Endothelial cell of umbilical vein (primary cell): ENCODE measurements at regions of chr19 and their contacts with region 1.

Region 1: DNA sequence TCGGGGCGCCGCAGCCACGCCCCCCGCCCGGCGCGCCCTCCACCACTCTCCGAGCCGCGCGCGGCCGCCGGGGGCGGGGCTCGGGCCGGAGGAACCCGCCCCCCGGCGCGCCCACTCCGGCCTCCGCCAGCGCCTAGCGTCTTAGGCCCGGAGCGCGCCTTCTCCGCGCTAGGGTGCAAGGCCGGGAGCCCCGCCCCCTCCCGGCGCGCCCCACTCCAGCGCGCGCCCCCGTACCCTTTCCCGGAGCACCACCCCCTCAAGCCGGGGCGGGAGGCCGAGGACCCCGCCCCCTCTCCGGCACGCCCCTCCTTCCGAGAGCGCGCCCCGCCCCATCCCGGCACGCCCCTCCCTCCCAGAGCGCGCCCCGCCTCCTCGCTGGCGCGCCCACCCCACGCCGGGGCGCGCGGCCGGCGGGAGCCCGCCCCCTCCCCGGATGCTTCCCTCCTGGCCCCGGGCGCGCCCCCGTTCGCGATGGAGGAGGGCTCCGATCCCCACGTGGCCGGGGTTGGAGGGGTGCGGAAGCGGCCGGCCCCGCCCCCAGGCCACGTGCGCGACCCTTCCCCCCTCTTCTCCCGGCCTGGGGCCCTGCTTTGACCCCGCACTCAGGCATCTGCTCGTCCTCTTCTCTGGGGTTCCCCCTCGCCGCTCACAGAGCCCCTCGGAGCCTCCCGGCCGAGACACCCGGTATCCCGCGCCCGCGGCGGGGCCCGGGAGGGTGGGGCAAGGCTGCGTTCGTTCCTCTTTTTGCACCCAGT is 524 bp upstream of the KLF16 start:
- DNase-seq: peak; percentile 89
- H3K4me3 ChIP-seq: peak overlapping the region; percentile 42 to 78 (median 73)
- H3K27ac ChIP-seq: peak overlapping the region; percentile 65
- H3K4me1 ChIP-seq: peaks cover 21% of the 10 kb centered on the region
- H3K27me3 ChIP-seq: no peaks in the 10 kb centered on the region
- CTCF ChIP-seq: no peak
- POLR2A ChIP-seq: peak; percentile 37

Region 2: DNA sequence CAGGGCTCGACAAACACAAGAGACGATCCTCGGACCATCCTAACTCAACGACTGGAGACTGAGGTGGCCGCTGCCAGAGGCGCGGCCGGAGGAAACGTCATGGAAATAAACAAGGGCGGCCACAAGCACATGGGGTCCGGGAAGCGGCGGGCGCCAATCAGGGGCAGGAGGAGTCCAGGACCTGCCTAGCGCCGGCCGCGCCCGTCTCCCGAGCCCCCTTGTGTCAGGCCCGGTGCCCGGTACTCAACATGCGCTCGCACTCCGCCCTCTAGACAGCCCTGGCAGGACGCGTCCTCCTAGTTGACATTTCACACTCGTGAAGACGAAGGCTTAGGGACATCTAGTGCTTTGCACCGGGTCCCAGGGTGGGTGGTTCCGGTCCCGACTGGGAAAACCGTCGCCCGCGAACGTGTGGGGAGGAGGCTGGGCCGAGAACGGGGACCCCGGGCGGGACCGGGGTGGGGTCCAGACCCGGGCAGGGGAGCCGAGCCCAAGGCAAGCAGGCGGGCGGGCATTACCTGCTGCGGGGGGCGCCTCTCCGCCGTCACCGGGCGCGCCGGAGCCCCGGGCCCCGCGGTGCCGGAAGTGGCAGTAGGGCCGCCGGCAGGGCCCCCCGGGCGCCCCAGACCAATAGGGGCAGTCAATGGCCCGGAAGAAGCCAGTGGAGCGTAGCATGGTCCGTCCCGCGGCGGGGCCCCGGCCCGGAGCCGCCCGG is 16.1 kb before region 1 on chr19:
- CTCF ChIA-PET with region 1: interaction called, 4 read pairs
- POLR2A ChIA-PET with region 1: no interaction called
- dilution Hi-C with region 1: no loop called
- intact Hi-C with region 1: loop called (anchors 1 kb)
- DNase-seq: peak; percentile 64
- H3K4me3 ChIP-seq: peak overlapping the region; percentile 47 to 76 (median 67)
- H3K27ac ChIP-seq: peak overlapping the region; percentile 99
- H3K4me1 ChIP-seq: peaks cover 8% of the 10 kb centered on the region
- H3K27me3 ChIP-seq: no peaks in the 10 kb centered on the region
- CTCF ChIP-seq: no peak
- POLR2A ChIP-seq: no peak

Region 3: DNA sequence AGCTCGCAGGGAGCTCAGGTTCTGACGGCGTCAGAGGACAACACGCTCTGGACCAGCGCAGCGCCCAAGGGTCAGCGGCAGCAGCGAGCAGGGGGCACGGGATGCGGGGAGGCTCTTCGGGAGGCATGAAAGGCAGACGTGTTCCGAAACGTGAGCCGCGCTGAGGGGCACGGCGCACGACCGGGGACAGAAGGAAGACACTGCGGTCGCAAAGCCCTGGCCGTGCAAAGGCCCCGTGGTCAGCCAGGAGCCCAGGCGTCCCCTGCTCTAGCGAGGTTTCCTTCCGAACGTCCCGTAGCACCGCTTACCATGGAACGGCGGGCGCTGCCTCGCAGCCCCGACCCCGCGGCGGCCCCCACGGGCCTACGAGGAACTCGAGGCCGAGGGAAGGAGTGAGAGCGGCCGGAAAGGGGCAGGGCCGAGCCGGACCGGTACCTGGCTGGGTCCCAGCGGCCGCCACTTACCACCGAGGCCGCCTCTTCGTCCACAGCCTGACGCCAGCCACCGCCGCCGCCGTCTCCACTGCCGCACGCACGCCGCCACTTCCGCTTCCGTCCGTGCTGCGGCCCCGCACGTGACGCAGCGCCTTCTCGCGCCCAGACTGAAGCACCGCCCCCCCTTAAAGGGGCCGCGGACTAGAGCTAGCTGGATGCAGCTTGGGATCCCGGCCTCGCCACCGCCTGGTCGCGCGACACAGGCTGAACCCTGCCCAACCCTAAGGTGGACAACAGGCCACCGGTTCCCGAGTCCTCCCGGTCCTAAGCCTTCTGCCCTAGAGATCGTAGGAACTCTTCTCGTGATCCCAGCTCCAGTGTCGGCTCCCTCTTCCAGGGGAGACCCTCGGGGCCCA is 12.0 kb after region 1 on chr19:
- CTCF ChIA-PET with region 1: interaction called, 44 read pairs
- POLR2A ChIA-PET with region 1: no interaction called
- dilution Hi-C with region 1: no loop called
- intact Hi-C with region 1: loop called (anchors 1 kb)
- DNase-seq: peak; percentile 91
- H3K4me3 ChIP-seq: peak overlapping the region; percentile 52 to 83 (median 72)
- H3K27ac ChIP-seq: peak overlapping the region; percentile 92
- H3K4me1 ChIP-seq: peaks cover 21% of the 10 kb centered on the region
- H3K27me3 ChIP-seq: no peaks in the 10 kb centered on the region
- CTCF ChIP-seq: no peak
- POLR2A ChIP-seq: peak; percentile 88

Region 4: DNA sequence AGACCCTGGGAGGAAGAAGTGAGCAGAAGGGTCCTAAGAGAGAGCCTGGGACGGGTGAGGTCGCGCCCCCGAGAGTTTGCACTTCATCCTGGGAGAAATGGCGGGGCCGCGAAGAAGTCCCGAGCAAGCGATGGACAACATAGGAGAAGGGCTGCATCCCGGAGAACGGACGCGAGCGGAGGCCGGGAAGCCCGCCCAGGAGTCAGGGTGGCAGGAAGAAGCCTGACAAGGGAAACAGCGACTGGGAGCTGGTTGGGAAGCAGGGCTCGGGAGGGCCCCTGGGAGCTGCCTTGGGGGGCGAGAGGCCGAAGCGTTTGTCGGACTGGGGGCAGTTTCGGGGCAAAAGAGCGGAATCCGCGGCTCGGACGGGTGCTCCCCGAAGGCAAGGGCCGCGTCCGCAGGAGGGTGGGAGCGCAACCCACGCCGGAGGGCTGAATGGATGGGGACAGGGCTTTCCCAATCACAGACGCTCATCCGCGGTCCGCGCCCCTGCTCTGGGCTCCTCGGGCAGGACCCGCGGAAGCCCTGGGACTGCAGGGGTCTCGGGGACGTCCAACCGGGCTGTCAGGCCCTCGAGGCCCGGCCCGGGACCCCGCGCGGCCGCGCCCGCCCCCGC is 20.9 kb after region 1 on chr19:
- CTCF ChIA-PET with region 1: interaction called, 12 read pairs
- POLR2A ChIA-PET with region 1: no interaction called
- dilution Hi-C with region 1: no loop called
- intact Hi-C with region 1: loop called (anchors 2 kb)
- DNase-seq: no peak
- H3K4me3 ChIP-seq: peak overlapping the region; percentile 83 to 92 (median 88)
- H3K27ac ChIP-seq: peak overlapping the region; percentile 78
- H3K4me1 ChIP-seq: peaks cover 27% of the 10 kb centered on the region
- H3K27me3 ChIP-seq: no peaks in the 10 kb centered on the region
- CTCF ChIP-seq: no peak
- POLR2A ChIP-seq: peak; percentile 61

Region 5: GRCh38 chr19:1905071-1905862 is 41.4 kb after region 1 on chr19 and contains the starts of genes ADAT3 and SCAMP4:
- CTCF ChIA-PET with region 1: interaction called, 4 read pairs
- POLR2A ChIA-PET with region 1: no interaction called
- dilution Hi-C with region 1: no loop called
- intact Hi-C with region 1: loop called (anchors 1 kb)
- DNase-seq: peak; percentile 99
- H3K4me3 ChIP-seq: peak within 1 kb of the TSS; percentile 55 to 63 (median 61)
- H3K27ac ChIP-seq: peak within 1 kb of the TSS; percentile 73
- H3K4me1 ChIP-seq: no peaks in the 10 kb centered on the region
- H3K27me3 ChIP-seq: no peaks in the 10 kb centered on the region
- CTCF ChIP-seq: no peak
- POLR2A ChIP-seq: peak; percentile 73
- total RNA-seq, gene ADAT3: 8.0 and 11.7 TPM in 2 replicates
- total RNA-seq, gene SCAMP4: 68.2 and 72.2 TPM in 2 replicates

Region 6: DNA sequence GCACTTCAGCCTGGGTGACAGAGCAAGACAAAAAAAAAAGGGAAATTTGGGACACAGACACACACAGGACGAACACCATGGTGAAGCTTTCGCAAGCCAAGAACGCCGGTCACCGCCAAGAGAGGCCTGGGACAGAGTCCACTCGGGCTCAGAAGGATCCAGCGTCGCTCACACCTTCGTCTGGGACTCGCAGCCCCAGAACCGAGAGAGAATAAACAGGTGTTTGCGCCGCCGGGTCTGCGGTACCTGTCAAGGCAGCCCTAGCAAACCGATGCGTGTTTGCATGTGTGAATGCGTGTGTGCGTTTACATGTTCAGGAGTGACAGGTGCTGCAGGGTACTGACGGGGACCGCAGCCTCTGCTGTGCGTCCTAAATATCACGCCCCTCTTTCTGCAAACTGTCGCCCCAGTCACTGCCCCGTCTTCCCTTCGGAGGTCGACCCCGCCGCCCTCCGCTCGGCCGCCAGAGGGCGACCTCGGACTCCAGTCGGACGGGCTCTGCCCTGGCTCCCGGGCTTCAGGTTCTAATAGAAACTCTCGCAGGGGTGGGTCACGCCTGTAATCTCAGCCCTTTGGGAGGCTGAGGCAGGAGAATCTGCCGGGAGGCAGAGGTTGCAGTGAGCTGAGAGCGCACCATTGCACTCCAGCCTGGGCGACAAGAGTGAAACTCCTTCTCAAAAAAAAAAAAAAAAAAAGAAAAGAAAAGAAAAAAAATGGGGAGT is 65.3 kb after region 1 on chr19:
- CTCF ChIA-PET with region 1: interaction called, 12 read pairs
- POLR2A ChIA-PET with region 1: no interaction called
- dilution Hi-C with region 1: no loop called
- intact Hi-C with region 1: loop called (anchors 2 kb)
- DNase-seq: peak; percentile 64
- H3K4me3 ChIP-seq: peak overlapping the region in 2 of 3 experiments; percentile 23 to 26
- H3K27ac ChIP-seq: no peak overlapping the region
- H3K4me1 ChIP-seq: peaks cover 4% of the 10 kb centered on the region
- H3K27me3 ChIP-seq: no peaks in the 10 kb centered on the region
- CTCF ChIP-seq: peak; percentile 82 to 97
- POLR2A ChIP-seq: no peak

Region 7: DNA sequence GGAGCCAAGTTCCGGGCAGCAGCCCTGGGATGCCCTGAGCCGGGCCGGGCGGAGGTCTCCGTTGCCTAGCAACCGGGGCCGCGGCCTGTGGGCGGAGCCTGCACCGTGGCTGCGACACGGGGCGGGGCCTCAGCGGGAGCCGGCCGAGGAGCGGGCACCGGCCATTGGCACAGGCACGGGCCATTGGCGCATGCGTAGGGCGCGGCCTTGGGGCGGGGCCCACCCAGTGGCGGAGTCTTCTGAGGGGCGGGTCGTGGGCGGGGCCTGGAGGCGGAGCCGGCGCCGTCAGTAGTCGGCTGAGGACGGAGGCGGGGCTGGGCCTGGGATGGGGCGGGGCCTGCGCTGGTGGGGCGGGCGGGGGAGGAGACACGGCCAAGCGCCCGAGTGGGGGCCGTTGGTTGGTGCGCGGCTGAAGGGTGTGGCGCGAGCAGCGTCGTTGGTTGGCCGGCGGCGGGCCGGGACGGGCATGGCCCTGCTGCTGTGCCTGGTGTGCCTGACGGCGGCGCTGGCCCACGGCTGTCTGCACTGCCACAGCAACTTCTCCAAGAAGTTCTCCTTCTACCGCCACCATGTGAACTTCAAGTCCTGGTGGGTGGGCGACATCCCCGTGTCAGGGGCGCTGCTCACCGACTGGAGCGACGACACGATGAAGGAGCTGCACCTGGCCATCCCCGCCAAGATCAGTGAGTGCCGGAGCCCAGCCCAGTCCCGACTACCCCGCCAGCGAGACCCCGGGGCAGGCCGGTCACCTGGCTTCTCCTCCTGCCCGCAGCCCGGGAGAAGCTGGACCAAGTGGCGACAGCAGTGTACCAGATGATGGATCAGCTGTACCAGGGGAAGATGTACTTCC is 232.8 kb after region 1 on chr19 and contains the start of gene IZUMO4:
- CTCF ChIA-PET with region 1: no interaction called
- POLR2A ChIA-PET with region 1: no interaction called
- dilution Hi-C with region 1: no loop called
- intact Hi-C with region 1: loop called (anchors 1 kb)
- DNase-seq: peak; percentile 97
- H3K4me3 ChIP-seq: peak within 1 kb of the TSS; percentile 58 to 90 (median 75)
- H3K27ac ChIP-seq: peak within 1 kb of the TSS; percentile 75
- H3K4me1 ChIP-seq: peaks cover 13% of the 10 kb centered on the region
- H3K27me3 ChIP-seq: no peaks in the 10 kb centered on the region
- CTCF ChIP-seq: peak in 1 of 2 donors; percentile 58
- POLR2A ChIP-seq: no peak
- total RNA-seq, gene IZUMO4: 1.1 and 2.0 TPM in 2 replicates